ENCODE measurements at regions of chr2 and their contacts with region 1.

Region 1: GRCh38 chr2:232327105-232328041 is 51.2 kb upstream of the ALPP start:
- DNase-seq: peak; percentile 69 to 75 (median 70)
- H3K4me3 ChIP-seq: no peak overlapping the region
- H3K4me3 Mint-ChIP-seq: no peak overlapping the region
- H3K27ac ChIP-seq: no peak overlapping the region
- H3K27ac Mint-ChIP-seq: peak overlapping the region in 1 of 7 donors; percentile 50
- H3K4me1 ChIP-seq: peaks cover 0 to 7% of the 10 kb centered on the region in 2 donors
- H3K4me1 Mint-ChIP-seq: peaks cover 14% of the 10 kb centered on the region
- H3K27me3 ChIP-seq: no peaks in the 10 kb centered on the region
- H3K27me3 Mint-ChIP-seq: peaks cover 0 to 1% (median 0%) of the 10 kb centered on the region in 3 donors
- CTCF ChIP-seq: peak; percentile 92

Region 2: GRCh38 chr2:231905026-231905425 is 422.3 kb before region 1 on chr2:
- intact Hi-C with region 1: loop called (anchors 5 kb)
- DNase-seq: no peak
- H3K4me3 ChIP-seq: no peak overlapping the region
- H3K4me3 Mint-ChIP-seq: no peak overlapping the region
- H3K27ac ChIP-seq: no peak overlapping the region
- H3K27ac Mint-ChIP-seq: no peak overlapping the region
- H3K4me1 ChIP-seq: no peaks in the 10 kb centered on the region
- H3K4me1 Mint-ChIP-seq: peaks cover 3% of the 10 kb centered on the region
- H3K27me3 ChIP-seq: no peaks in the 10 kb centered on the region
- H3K27me3 Mint-ChIP-seq: peaks cover 2 to 19% (median 8%) of the 10 kb centered on the region in 3 donors
- CTCF ChIP-seq: no peak

Region 3: DNA sequence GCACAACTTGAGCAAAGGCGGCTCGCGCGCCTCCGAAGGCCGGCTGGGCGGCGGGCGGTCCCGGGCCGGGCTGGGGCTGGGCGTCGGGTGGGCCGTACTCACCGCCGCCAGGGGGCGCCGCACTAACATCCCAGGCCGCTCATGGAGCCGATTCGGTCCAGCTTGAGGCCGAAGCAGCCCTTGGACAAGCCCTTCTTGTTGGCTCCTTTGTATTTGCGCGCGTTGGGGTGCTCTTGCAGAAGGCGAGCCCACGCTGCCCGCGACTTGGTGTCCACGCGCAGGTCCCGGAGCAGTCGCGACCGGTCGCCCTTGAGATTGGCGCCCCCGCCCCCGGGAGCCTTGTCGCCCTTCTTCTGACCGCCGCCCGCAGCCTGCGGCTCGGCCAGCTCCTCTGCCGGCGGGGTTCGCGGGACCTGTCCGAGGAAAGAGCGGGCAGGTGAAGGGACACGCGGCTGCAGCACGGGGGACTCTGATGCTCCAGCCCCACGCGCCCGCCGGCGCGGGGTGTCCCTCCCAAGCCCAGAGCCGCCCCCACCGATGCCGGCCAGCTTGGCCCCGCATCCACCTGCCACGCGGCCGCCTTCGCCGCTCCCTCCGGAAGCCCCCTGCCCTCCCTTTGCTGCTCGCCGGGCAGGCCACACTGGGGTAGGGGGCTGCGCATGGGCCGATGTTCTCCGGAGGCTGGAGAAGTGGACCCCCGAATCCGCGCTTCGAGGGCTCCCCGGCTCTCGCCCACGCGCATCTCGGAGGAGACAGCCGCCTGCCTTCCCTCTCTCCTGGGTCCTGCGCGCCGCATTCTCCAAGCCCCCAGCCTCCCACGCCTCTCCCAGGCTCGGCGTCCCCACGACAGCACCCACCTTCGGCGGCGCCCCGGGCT is 401.8 kb before region 1 on chr2:
- intact Hi-C with region 1: loop called (anchors 2 kb)
- DNase-seq: peak; percentile 63 to 70 (median 70)
- H3K4me3 ChIP-seq: peak overlapping the region in 1 of 3 experiments; percentile 65
- H3K4me3 Mint-ChIP-seq: peak overlapping the region; percentile 59 to 82
- H3K27ac ChIP-seq: no peak overlapping the region
- H3K27ac Mint-ChIP-seq: no peak overlapping the region
- H3K4me1 ChIP-seq: peaks cover 16 to 24% of the 10 kb centered on the region in 2 donors
- H3K4me1 Mint-ChIP-seq: peaks cover 12% of the 10 kb centered on the region
- H3K27me3 ChIP-seq: peaks cover 28 to 70% of the 10 kb centered on the region in 2 donors
- H3K27me3 Mint-ChIP-seq: peaks cover 50 to 78% (median 60%) of the 10 kb centered on the region in 3 donors
- CTCF ChIP-seq: peak; percentile 89

Region 4: GRCh38 chr2:232292395-232293154 is 34.8 kb before region 1 on chr2:
- intact Hi-C with region 1: loop called in 1 of 2 experiments (anchors 5 kb)
- DNase-seq: peak; percentile 60 to 80 (median 64)
- H3K4me3 ChIP-seq: no peak overlapping the region
- H3K4me3 Mint-ChIP-seq: no peak overlapping the region
- H3K27ac ChIP-seq: peak overlapping the region in 1 of 2 donors; percentile 15
- H3K27ac Mint-ChIP-seq: peak overlapping the region in 5 of 7 donors; percentile 16 to 85 (median 66)
- H3K4me1 ChIP-seq: peaks cover 16 to 21% of the 10 kb centered on the region in 2 donors
- H3K4me1 Mint-ChIP-seq: peaks cover 17% of the 10 kb centered on the region
- H3K27me3 ChIP-seq: no peaks in the 10 kb centered on the region
- H3K27me3 Mint-ChIP-seq: peaks cover 1 to 2% (median 2%) of the 10 kb centered on the region in 3 donors
- CTCF ChIP-seq: peak; percentile 86

Region 5: GRCh38 chr2:232632908-232633732 is 305.7 kb after region 1 on chr2 and contains the start of gene EFHD1:
- intact Hi-C with region 1: no loop called
- DNase-seq: no peak
- H3K4me3 ChIP-seq: peak within 1 kb of the TSS; percentile 14 to 68 (median 24)
- H3K4me3 Mint-ChIP-seq: peak within 1 kb of the TSS in 1 of 2 donors; percentile 88
- H3K27ac ChIP-seq: no peak within 1 kb of the TSS
- H3K27ac Mint-ChIP-seq: peak within 1 kb of the TSS in 1 of 7 donors; percentile 48
- H3K4me1 ChIP-seq: peaks cover 9 to 13% of the 10 kb centered on the region in 2 donors
- H3K4me1 Mint-ChIP-seq: peaks cover 4% of the 10 kb centered on the region
- H3K27me3 ChIP-seq: peaks cover 42 to 78% of the 10 kb centered on the region in 2 donors
- H3K27me3 Mint-ChIP-seq: peaks cover 58 to 94% (median 86%) of the 10 kb centered on the region in 3 donors
- CTCF ChIP-seq: no peak
- polyA plus RNA-seq, gene EFHD1: not detected